CD8-positive, alpha-beta T cell (primary cell): ENCODE measurements at regions of chr1 and their contacts with region 1.

Region 1: DNA sequence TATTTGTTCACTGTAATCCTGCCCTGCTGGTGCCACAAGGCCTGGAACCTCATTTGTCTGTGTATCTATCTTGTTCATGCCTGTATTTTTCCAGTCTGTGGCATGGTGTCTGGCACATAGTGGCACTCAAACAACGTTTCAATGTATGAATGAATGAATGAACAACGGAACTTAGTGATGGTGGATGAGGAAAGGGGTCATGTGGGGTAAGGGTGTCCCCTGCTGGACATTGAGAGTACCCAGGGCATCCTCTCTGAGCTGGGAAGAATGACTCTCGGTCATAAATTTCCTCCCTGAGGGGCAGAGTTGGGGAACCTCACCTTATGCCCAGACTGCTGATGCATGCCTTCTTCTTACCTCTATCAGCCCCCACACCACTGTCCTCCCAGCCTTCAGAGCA is 18.9 kb upstream of the ZNF683 start:
- DNase-seq: peak in 7 of 9 experiments; percentile 32 to 80 (median 51)
- ATAC-seq: peak; percentile 72
- H3K4me3 ChIP-seq: no peak overlapping the region
- H3K4me3 Mint-ChIP-seq: no peak overlapping the region
- H3K27ac ChIP-seq: no peak overlapping the region
- H3K27ac Mint-ChIP-seq: no peak overlapping the region
- H3K4me1 ChIP-seq: peaks cover 27% of the 10 kb centered on the region
- H3K4me1 Mint-ChIP-seq: peaks cover 30% of the 10 kb centered on the region
- H3K27me3 ChIP-seq: peaks cover 0 to 6% of the 10 kb centered on the region in 2 experiments
- H3K27me3 Mint-ChIP-seq: no peaks in the 10 kb centered on the region
- CTCF ChIP-seq: peak; percentile 44

Region 2: DNA sequence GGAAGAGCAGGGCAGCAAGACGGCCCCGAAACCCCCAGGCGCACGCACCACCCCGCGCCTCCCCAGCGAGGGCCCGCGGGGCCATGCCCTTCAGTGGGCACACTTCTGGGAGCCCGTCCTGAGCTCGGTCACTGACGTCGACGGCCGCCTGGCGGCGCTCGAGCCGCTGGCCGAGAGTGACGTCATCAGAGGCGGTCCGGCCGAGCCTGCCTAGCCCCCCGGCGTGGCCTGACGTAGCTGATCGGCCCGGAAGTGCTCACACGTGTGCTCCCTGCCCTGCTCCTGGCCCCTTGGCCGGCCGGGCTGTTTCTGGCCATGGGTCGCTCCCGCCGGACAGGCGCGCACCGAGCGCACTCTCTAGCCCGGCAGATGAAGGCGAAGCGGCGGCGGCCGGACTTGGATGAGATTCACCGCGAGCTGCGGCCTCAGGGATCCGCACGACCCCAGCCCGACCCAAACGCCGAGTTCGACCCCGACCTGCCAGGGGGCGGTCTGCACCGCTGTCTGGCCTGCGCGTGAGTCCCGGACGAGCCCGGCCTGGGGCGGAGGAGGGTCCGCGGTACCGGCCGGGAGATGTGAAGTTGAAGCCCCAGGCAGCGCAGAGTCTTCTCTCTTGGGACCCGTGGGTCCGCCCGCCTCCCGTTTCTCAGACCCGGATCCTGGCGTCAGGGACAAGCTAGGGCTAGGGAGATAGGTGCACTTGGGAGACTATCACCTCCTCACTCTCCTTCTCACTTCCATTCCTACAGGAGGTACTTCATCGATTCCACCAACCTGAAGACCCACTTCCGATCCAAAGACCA is 221.6 kb before region 1 on chr1 and contains the start of gene ZNF593:
- CTCF ChIA-PET with region 1: interaction called, 5 read pairs
- POLR2A ChIA-PET with region 1: no interaction called
- intact Hi-C with region 1: loop called in 1 of 2 experiments (anchors 10 kb)
- DNase-seq: peak; percentile 69 to 91 (median 85)
- ATAC-seq: peak; percentile 92
- H3K4me3 ChIP-seq: peak within 1 kb of the TSS; percentile 85 to 89
- H3K4me3 Mint-ChIP-seq: peak within 1 kb of the TSS; percentile 87
- H3K27ac ChIP-seq: peak within 1 kb of the TSS; percentile 77 to 78
- H3K27ac Mint-ChIP-seq: peak within 1 kb of the TSS; percentile 88
- H3K4me1 ChIP-seq: peaks cover 11% of the 10 kb centered on the region
- H3K4me1 Mint-ChIP-seq: peaks cover 12% of the 10 kb centered on the region
- H3K27me3 ChIP-seq: no peaks in the 10 kb centered on the region
- H3K27me3 Mint-ChIP-seq: no peaks in the 10 kb centered on the region
- CTCF ChIP-seq: peak; percentile 74
- total RNA-seq, gene ZNF593: 8.1 to 8.8 TPM

Region 3: GRCh38 chr1:26284597-26285360 is 106.7 kb before region 1 on chr1:
- CTCF ChIA-PET with region 1: interaction called, 10 read pairs
- POLR2A ChIA-PET with region 1: no interaction called
- intact Hi-C with region 1: no loop called
- DNase-seq: peak; percentile 82 to 98 (median 94)
- ATAC-seq: peak; percentile 72
- H3K4me3 ChIP-seq: peak overlapping the region; percentile 27 to 28
- H3K4me3 Mint-ChIP-seq: peak overlapping the region; percentile 82
- H3K27ac ChIP-seq: peak overlapping the region; percentile 61 to 76
- H3K27ac Mint-ChIP-seq: peak overlapping the region; percentile 100
- H3K4me1 ChIP-seq: peaks cover 93% of the 10 kb centered on the region
- H3K4me1 Mint-ChIP-seq: peaks cover 92% of the 10 kb centered on the region
- H3K27me3 ChIP-seq: no peaks in the 10 kb centered on the region
- H3K27me3 Mint-ChIP-seq: no peaks in the 10 kb centered on the region
- CTCF ChIP-seq: peak; percentile 46

Region 4: DNA sequence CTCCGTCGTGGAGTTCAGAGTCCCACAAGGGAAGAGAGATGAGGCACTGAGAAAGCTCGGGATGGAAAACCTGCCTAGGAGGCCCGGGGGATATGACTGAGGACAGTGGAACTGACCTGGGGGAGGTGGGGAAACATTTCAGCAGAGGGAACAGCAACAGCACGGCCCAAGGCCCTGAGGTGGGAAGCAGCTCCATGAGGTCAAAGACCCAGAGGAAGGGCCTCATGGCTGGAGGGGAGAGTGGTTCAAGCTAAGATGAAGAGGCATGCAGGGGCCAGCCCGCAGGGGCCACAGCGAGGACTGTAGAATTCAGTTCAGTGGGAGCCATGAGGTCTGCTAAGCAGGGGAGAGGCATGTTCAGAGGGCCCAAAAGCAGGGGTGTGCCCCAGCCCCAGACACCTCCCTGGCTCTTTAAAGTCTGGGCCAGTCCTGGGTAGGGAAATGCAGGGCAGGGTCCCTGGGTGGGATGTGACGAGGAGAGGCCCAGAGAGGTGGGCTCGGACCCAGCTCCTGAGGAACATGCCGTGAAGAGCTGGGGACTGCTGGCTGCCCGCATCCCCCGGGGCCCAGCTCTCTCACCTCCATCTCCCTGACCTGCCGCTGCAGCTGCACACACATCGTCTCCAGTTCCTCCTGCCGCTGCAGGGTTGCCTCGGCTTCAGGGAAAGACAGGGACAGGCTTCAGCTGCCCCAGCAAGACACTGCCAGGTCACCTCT is 95.0 kb before region 1 on chr1:
- CTCF ChIA-PET with region 1: no interaction called
- POLR2A ChIA-PET with region 1: no interaction called
- intact Hi-C with region 1: no loop called
- DNase-seq: no peak
- ATAC-seq: no peak
- H3K4me3 ChIP-seq: no peak overlapping the region
- H3K4me3 Mint-ChIP-seq: no peak overlapping the region
- H3K27ac ChIP-seq: no peak overlapping the region
- H3K27ac Mint-ChIP-seq: no peak overlapping the region
- H3K4me1 ChIP-seq: peaks cover 16% of the 10 kb centered on the region
- H3K4me1 Mint-ChIP-seq: peaks cover 29% of the 10 kb centered on the region
- H3K27me3 ChIP-seq: no peaks in the 10 kb centered on the region
- H3K27me3 Mint-ChIP-seq: no peaks in the 10 kb centered on the region
- CTCF ChIP-seq: no peak

Region 5: GRCh38 chr1:26336477-26337205 is 54.8 kb before region 1 on chr1:
- CTCF ChIA-PET with region 1: interaction called, 3 read pairs
- POLR2A ChIA-PET with region 1: no interaction called
- intact Hi-C with region 1: loop called in 1 of 2 experiments (anchors 1 kb)
- DNase-seq: peak; percentile 67 to 91 (median 86)
- ATAC-seq: peak; percentile 86
- H3K4me3 ChIP-seq: peak overlapping the region; percentile 65 to 89
- H3K4me3 Mint-ChIP-seq: peak overlapping the region; percentile 87
- H3K27ac ChIP-seq: no peak overlapping the region
- H3K27ac Mint-ChIP-seq: no peak overlapping the region
- H3K4me1 ChIP-seq: peaks cover 18% of the 10 kb centered on the region
- H3K4me1 Mint-ChIP-seq: peaks cover 13% of the 10 kb centered on the region
- H3K27me3 ChIP-seq: no peaks in the 10 kb centered on the region
- H3K27me3 Mint-ChIP-seq: no peaks in the 10 kb centered on the region
- CTCF ChIP-seq: no peak

Region 6: GRCh38 chr1:26372039-26372438 is 19.4 kb before region 1 on chr1:
- CTCF ChIA-PET with region 1: interaction called, 20 read pairs
- POLR2A ChIA-PET with region 1: interaction called, 4 read pairs
- intact Hi-C with region 1: loop called in 1 of 2 experiments (anchors 2 kb)
- DNase-seq: no peak
- ATAC-seq: no peak
- H3K4me3 ChIP-seq: no peak overlapping the region
- H3K4me3 Mint-ChIP-seq: no peak overlapping the region
- H3K27ac ChIP-seq: peak overlapping the region in 1 of 2 experiments; percentile 54
- H3K27ac Mint-ChIP-seq: peak overlapping the region; percentile 66
- H3K4me1 ChIP-seq: peaks cover 88% of the 10 kb centered on the region
- H3K4me1 Mint-ChIP-seq: peaks cover 82% of the 10 kb centered on the region
- H3K27me3 ChIP-seq: no peaks in the 10 kb centered on the region
- H3K27me3 Mint-ChIP-seq: no peaks in the 10 kb centered on the region
- CTCF ChIP-seq: no peak